AG04449 (cell line): ENCODE measurements at regions of chr3 and their contacts with region 1.

Region 1: GRCh38 chr3:12484198-12484974 is at the start of gene TSEN2:
- DNase-seq: no peak
- H3K4me3 ChIP-seq: peak within 1 kb of the TSS; percentile 90
- CTCF ChIP-seq: peak; percentile 39

Region 2: GRCh38 chr3:12158387-12159226 is 325.8 kb before region 1 on chr3 and contains the start of gene TIMP4:
- CTCF ChIA-PET with region 1: interaction called, 20 read pairs
- POLR2A ChIA-PET with region 1: no interaction called
- DNase-seq: no peak
- H3K4me3 ChIP-seq: peak within 1 kb of the TSS; percentile 37
- CTCF ChIP-seq: no peak

Region 3: DNA sequence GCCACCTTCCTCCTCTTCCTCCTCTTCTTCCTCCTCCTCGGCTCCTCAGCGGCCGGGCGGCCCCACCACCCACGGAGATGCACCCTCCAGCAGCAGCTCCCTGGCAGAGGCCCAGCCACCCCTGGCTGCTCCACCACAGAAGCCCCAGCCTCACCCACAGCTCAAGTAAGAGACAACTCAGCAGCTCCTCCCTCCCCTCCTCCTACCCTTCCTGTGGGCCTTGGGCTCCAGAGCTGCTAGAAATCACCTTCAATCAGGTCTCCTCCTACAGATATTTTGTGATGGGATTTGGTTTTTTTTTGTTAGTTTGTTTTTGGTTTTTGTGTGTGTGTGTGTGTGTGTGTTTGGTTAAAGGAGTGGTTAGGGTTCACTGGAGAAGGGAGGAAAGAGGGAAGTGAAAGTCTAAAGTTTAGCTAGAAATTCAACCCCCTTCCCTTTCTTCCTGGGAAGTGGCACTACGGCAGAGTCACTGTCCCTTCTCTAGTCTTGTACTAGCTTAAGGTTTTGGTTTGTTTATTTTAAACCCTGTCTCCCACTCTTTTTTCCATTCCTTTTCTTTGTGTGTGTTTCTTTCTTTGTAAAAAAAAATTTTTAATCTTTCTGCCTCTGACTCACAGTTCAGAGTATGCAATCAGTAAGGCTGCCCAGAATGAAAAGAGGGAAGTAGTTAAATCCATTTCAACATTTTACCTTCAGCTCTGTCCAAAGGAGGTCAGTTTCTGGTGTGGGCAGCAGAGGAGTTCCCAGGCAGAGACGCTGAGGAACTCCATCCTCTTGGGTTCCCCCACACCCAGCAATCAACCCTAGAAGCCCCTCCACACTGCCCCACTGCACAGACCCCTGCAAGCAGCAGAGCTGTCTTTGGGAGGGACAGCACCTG is 296.7 kb before region 1 on chr3:
- CTCF ChIA-PET with region 1: interaction called, 10 read pairs
- POLR2A ChIA-PET with region 1: no interaction called
- DNase-seq: no peak
- H3K4me3 ChIP-seq: no peak overlapping the region
- CTCF ChIP-seq: no peak

Region 4: DNA sequence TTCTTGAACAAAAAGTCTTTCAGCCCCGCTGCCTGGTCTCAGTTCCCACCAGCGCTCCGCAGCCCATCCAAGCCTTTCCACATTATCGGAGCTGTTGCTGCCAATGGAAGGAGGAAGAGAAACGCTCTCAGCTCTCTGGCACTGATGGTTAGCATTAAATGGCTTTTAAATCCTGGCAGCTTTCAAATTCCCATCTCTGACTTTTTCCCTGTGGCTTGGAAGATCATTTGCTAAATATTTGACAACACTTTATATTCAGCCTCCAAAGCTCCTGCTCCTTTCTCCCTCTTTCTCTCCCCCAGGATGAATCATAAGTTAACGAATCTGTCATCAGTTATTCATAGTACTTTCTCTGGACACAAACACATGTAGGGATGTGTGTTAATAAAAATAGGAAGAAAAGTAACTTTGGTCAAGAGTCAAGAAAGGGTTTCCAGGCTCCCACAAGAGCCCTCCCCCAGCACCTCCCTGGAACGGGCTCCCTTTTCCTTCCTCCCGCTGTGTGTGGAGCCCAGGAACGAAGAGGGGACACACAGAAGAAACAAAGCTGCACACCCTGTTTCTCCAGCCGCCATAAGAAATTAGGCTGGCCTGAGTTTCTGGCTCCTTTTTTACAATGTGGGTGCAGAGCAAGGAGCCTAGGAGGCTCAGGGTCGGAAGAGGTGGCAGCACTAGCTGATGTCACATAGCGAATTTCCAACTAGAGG is 47.7 kb before region 1 on chr3:
- CTCF ChIA-PET with region 1: interaction called, 10 read pairs
- POLR2A ChIA-PET with region 1: no interaction called
- DNase-seq: no peak
- H3K4me3 ChIP-seq: peak overlapping the region; percentile 30
- CTCF ChIP-seq: no peak

Region 5: DNA sequence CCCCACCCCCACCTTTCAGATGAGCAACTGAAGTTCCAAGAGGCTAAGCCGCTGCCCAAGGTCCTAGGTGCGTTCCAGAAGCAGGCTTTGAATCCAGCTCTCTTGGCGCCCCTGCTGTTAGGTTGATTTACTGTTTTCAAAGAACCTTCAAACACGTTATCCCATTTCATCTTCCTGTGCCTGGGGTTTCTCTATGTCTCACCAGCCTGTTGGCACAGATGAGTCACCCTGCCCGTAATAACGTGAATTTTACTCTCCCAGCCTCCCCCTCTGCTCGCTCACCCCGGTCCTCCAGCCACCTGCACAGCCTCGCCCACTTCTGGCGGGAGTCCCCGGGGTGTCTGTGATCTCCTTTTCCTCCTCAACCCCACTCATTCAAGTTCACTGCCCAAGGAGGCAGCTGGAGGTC is 13.1 kb before region 1 on chr3:
- CTCF ChIA-PET with region 1: interaction called, 41 read pairs
- POLR2A ChIA-PET with region 1: no interaction called
- DNase-seq: no peak
- H3K4me3 ChIP-seq: no peak overlapping the region
- CTCF ChIP-seq: no peak

Region 6: DNA sequence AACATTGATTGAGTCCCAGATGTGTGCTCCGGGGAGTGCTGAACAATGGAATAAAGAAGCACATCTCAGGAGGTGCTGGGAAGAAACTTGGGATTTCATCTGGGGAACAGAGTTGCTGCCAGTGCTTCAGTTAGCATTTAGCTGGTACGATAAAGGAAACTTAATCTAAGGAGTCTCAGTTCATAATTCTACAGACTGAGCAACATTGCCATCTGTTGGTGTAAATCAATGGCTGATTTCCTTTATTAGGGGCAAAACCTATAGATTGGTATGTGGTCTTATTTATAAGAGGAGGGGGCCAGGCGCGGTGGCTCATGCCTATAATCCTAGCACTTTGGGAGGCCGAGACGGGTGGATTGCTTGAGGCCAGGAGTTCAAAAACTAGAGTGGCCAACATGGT is 52.0 kb after region 1 on chr3:
- CTCF ChIA-PET with region 1: interaction called, 31 read pairs
- POLR2A ChIA-PET with region 1: no interaction called
- DNase-seq: no peak
- H3K4me3 ChIP-seq: no peak overlapping the region
- CTCF ChIP-seq: peak; percentile 29